ENCODE measurements at regions of chr1 and their contacts with region 1.

Region 1: DNA sequence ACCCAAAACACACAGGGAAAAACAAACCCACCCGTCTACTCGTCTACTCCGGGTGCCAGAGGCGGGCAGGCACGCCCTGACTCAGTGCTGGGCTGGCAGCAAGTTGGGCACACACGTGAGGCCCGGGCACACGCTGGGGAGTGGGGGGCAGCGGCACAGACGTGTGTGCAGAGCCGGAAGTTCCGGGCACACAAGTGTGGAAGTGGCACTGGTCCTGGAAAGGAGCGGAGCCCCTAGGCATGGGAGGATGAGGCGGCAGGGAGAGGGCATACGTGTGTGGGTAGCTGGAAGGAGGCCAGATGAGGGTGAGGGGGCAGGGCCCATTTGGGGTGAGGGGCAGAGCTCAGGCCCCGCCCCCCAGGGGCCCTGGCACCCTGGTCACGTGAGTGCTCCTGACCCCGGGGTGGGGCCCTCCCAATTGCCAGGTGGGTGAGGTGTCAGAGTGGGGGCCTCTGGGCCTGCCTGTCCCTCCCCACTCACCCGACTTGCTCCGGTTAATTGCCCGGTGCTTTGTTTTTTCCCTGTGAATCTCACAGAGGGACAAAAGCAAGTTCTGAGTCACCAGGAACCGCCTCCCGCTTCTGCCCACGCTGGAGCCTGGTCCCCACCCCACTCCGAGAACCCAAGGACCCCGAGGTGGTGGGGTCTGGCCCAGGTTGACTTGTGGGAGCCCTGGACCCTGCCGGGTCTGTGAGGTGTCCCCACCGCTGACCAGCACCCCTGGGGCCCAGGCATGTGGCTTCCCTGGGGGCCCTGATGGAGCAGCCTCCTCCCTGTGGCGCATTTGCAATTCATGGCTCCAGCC is 104.8 kb upstream of the CASZ1 start:
- DNase-seq: peak in 1 of 2 experiments; percentile 59
- H3K4me3 ChIP-seq: no peak overlapping the region
- H3K27ac ChIP-seq: no peak overlapping the region
- H3K4me1 ChIP-seq: peaks cover 0 to 35% (median 22%) of the 10 kb centered on the region in 4 experiments; a peak in 6 of 7 replicates
- H3K27me3 ChIP-seq: no peaks in the 10 kb centered on the region
- CTCF ChIP-seq: no peak
- EP300 ChIP-seq: no peak
- POLR2A ChIP-seq: no peak
- RAD21 ChIP-seq: no peak

Region 2: DNA sequence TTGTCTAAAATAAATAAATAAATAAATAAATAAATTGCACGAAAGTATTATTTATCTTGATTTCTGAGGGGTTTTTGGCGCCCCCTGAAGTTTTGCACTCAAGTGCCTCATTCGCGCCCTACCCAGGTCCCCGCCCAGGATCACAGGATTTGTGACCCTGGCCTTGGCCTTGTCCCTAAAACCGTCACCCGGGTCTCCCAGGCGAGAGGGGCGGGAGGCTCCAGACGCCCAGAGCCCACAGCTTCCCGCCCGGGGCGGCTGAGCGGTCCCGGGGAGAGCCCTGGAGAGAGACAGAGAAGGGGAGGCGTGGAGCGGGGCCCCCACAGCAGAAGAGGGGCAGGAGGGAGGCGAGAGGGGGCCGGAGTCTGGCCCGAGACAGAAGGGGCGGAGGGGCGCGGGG is 13.0 kb before region 1 on chr1:
- CTCF ChIA-PET with region 1: interaction called, 17 read pairs
- POLR2A ChIA-PET with region 1: interaction called, 4 read pairs
- DNase-seq: peak in 1 of 2 experiments; percentile 67
- H3K4me3 ChIP-seq: peak overlapping the region; percentile 17 to 71 (median 24); a peak in 6 of 8 replicates
- H3K27ac ChIP-seq: no peak overlapping the region
- H3K4me1 ChIP-seq: peaks cover 2 to 16% (median 8%) of the 10 kb centered on the region in 4 experiments; a peak in 6 of 7 replicates
- H3K27me3 ChIP-seq: peaks cover 0 to 19% (median 14%) of the 10 kb centered on the region in 4 experiments; a peak in 6 of 7 replicates
- CTCF ChIP-seq: peak in 1 of 3 experiments; percentile 24; a peak in 1 of 4 replicates
- EP300 ChIP-seq: no peak
- POLR2A ChIP-seq: no peak
- RAD21 ChIP-seq: no peak; a peak in 1 of 4 replicates

Region 3: GRCh38 chr1:10918531-10918930 is 17.2 kb after region 1 on chr1:
- CTCF ChIA-PET with region 1: no interaction called
- POLR2A ChIA-PET with region 1: no interaction called
- DNase-seq: no peak
- H3K4me3 ChIP-seq: no peak overlapping the region
- H3K27ac ChIP-seq: no peak overlapping the region
- H3K4me1 ChIP-seq: no peaks in the 10 kb centered on the region; a peak in 1 of 7 replicates
- H3K27me3 ChIP-seq: no peaks in the 10 kb centered on the region
- CTCF ChIP-seq: no peak
- EP300 ChIP-seq: no peak
- POLR2A ChIP-seq: no peak
- RAD21 ChIP-seq: no peak

Region 4: GRCh38 chr1:10960411-10961299 is 59.4 kb after region 1 on chr1:
- CTCF ChIA-PET with region 1: no interaction called
- POLR2A ChIA-PET with region 1: no interaction called
- DNase-seq: peak; percentile 80 to 99
- H3K4me3 ChIP-seq: peak overlapping the region in 2 of 4 experiments; percentile 10 to 34; a peak in 4 of 8 replicates
- H3K27ac ChIP-seq: no peak overlapping the region
- H3K4me1 ChIP-seq: peaks cover 0 to 11% (median 9%) of the 10 kb centered on the region in 4 experiments; a peak in 5 of 7 replicates
- H3K27me3 ChIP-seq: peaks cover 0 to 2% (median 0%) of the 10 kb centered on the region in 4 experiments; a peak in 1 of 7 replicates
- CTCF ChIP-seq: peak; percentile 87 to 95 (median 95)
- EP300 ChIP-seq: no peak
- POLR2A ChIP-seq: no peak
- RAD21 ChIP-seq: peak; percentile 63 to 80

Region 5: GRCh38 chr1:11000526-11000925 is 99.2 kb after region 1 on chr1:
- CTCF ChIA-PET with region 1: no interaction called
- POLR2A ChIA-PET with region 1: no interaction called
- DNase-seq: no peak
- H3K4me3 ChIP-seq: no peak overlapping the region
- H3K27ac ChIP-seq: no peak overlapping the region
- H3K4me1 ChIP-seq: no peaks in the 10 kb centered on the region
- H3K27me3 ChIP-seq: no peaks in the 10 kb centered on the region
- CTCF ChIP-seq: no peak
- EP300 ChIP-seq: no peak
- POLR2A ChIP-seq: no peak
- RAD21 ChIP-seq: no peak

Measured in H1 (cell line).